Sigmoid colon (tissue), 7 donors: ENCODE measurements at regions of chr19 and their contacts with region 1.

Region 1: GRCh38 chr19:34259367-34260095 is 5.2 kb downstream of the GARRE1 start:
- DNase-seq: no peak
- H3K4me3 ChIP-seq: no peak overlapping the region
- H3K27ac ChIP-seq: no peak overlapping the region
- H3K4me1 ChIP-seq: peaks cover 0 to 55% (median 35%) of the 10 kb centered on the region in 4 donors
- H3K27me3 ChIP-seq: no peaks in the 10 kb centered on the region
- CTCF ChIP-seq: no peak
- EP300 ChIP-seq: no peak
- POLR2A ChIP-seq: no peak

Region 2: GRCh38 chr19:34120846-34121639 is 138.5 kb before region 1 on chr19:
- intact Hi-C with region 1: no loop called
- DNase-seq: no peak
- H3K4me3 ChIP-seq: no peak overlapping the region
- H3K27ac ChIP-seq: no peak overlapping the region
- H3K4me1 ChIP-seq: no peaks in the 10 kb centered on the region
- H3K27me3 ChIP-seq: no peaks in the 10 kb centered on the region
- CTCF ChIP-seq: peak; percentile 13 to 45 (median 35)
- EP300 ChIP-seq: no peak
- POLR2A ChIP-seq: no peak

Region 3: GRCh38 chr19:34336781-34337271 is 77.3 kb after region 1 on chr19:
- intact Hi-C with region 1: loop called (anchors 2 kb)
- DNase-seq: no peak
- H3K4me3 ChIP-seq: no peak overlapping the region
- H3K27ac ChIP-seq: no peak overlapping the region
- H3K4me1 ChIP-seq: no peaks in the 10 kb centered on the region
- H3K27me3 ChIP-seq: no peaks in the 10 kb centered on the region
- CTCF ChIP-seq: peak; percentile 7 to 49 (median 38)
- EP300 ChIP-seq: no peak
- POLR2A ChIP-seq: no peak